PC-3 (cell line): ENCODE measurements at regions of chr12 and their contacts with region 1.

Region 1: GRCh38 chr12:110836291-110836690 is 10.5 kb upstream of the CCDC63 start:
- DNase-seq: no peak
- ATAC-seq: no peak
- H3K4me3 ChIP-seq: no peak overlapping the region
- H3K27ac ChIP-seq: no peak overlapping the region
- H3K4me1 ChIP-seq: no peaks in the 10 kb centered on the region; the same call in 1 of the 2 replicates
- H3K27me3 ChIP-seq: no peaks in the 10 kb centered on the region
- CTCF ChIP-seq: no peak

Region 2: GRCh38 chr12:110373025-110373424 is 463.3 kb before region 1 on chr12:
- CTCF ChIA-PET with region 1: no interaction called
- POLR2A ChIA-PET with region 1: interaction called, 18 read pairs
- intact Hi-C with region 1: no loop called
- DNase-seq: no peak
- ATAC-seq: no peak
- H3K4me3 ChIP-seq: no peak overlapping the region
- H3K27ac ChIP-seq: no peak overlapping the region
- H3K4me1 ChIP-seq: no peaks in the 10 kb centered on the region
- H3K27me3 ChIP-seq: no peaks in the 10 kb centered on the region
- CTCF ChIP-seq: no peak